Aorta (tissue), 5 donors: ENCODE measurements at regions of chr2 and their contacts with region 1.

Region 1: GRCh38 chr2:237012577-237013267 is 73.0 kb upstream of the COPS8 start:
- DNase-seq: no peak
- ATAC-seq: no peak
- H3K4me3 ChIP-seq: no peak overlapping the region
- H3K27ac ChIP-seq: no peak overlapping the region
- H3K4me1 ChIP-seq: no peaks in the 10 kb centered on the region
- H3K27me3 ChIP-seq: no peaks in the 10 kb centered on the region

Region 2: GRCh38 chr2:236824877-236825692 is 187.6 kb before region 1 on chr2:
- intact Hi-C with region 1: loop called in 1 of 2 experiments (anchors 10 kb)
- DNase-seq: no peak
- ATAC-seq: no peak
- H3K4me3 ChIP-seq: no peak overlapping the region
- H3K27ac ChIP-seq: no peak overlapping the region
- H3K4me1 ChIP-seq: no peaks in the 10 kb centered on the region
- H3K27me3 ChIP-seq: no peaks in the 10 kb centered on the region